ENCODE measurements at regions of chr9 and their contacts with region 1.

Region 1: GRCh38 chr9:99211741-99212140 is 10.0 kb downstream of the ALG2 start:
- H3K4me3 ChIP-seq: no peak overlapping the region
- H3K27ac ChIP-seq: no peak overlapping the region
- H3K4me1 ChIP-seq: no peaks in the 10 kb centered on the region
- CTCF ChIP-seq: no peak

Region 2: GRCh38 chr9:99118782-99119466 is 92.8 kb before region 1 on chr9:
- CTCF ChIA-PET with region 1: no interaction called
- POLR2A ChIA-PET with region 1: no interaction called
- H3K4me3 ChIP-seq: no peak overlapping the region
- H3K27ac ChIP-seq: no peak overlapping the region
- H3K4me1 ChIP-seq: peaks cover 9% of the 10 kb centered on the region
- CTCF ChIP-seq: no peak

Region 3: GRCh38 chr9:99162759-99163364 is 48.9 kb before region 1 on chr9:
- CTCF ChIA-PET with region 1: no interaction called
- POLR2A ChIA-PET with region 1: no interaction called
- H3K4me3 ChIP-seq: no peak overlapping the region
- H3K27ac ChIP-seq: no peak overlapping the region
- H3K4me1 ChIP-seq: no peaks in the 10 kb centered on the region
- CTCF ChIP-seq: peak; percentile 30; the same call in 1 of the 2 replicates

Region 4: DNA sequence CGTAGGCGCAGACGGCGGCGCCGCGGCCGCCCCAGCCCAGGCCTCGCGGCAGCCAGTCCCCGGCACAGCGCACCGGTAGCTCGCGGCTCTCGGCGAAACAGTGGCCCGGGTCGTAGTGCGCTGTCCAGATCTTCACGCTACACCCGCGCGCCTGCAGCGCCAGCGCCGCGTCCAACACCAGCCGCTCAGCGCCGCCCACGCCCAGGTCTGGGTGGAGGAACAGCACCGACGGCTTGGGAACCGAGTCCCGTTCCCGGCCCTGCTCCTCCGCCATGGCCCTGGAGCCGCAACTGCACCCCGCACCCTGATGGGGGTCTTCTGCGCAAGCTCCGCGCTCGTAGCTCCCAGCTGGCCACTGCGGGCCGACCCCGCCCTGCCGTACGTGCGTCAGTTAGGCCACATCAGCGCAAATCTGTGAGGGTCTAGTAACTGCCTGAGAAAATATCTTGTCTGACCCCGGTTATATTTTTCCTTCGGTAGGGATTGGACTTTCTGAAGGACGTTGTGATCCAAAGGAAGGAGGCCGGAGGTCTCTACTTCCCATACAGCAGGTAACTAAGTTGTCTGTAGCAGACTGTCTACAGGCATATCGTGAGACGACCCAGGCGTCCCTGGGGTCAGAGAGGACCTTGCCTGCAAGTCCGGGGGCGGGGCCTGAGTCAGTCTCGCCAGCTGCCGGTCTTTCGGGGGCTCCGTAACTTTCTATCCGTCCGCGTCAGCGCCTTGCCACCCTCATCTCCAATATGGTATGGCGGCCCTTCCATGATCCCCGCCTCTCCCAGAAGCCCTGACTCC is 10.1 kb after region 1 on chr9 and contains the starts of genes ALG2 and SEC61B:
- CTCF ChIA-PET with region 1: no interaction called
- POLR2A ChIA-PET with region 1: interaction called, 10 read pairs
- H3K4me3 ChIP-seq: peak within 1 kb of the TSS; percentile 97
- H3K27ac ChIP-seq: peak within 1 kb of the TSS; percentile 92
- H3K4me1 ChIP-seq: peaks cover 3% of the 10 kb centered on the region
- CTCF ChIP-seq: no peak; the same call in 1 of the 2 replicates